B cell (primary cell): ENCODE measurements at regions of chr19 and their contacts with region 1.

Region 1: GRCh38 chr19:50804420-50805272 is 14.4 kb downstream of the ACP4 start:
- DNase-seq: peak; percentile 99
- ATAC-seq: peak; percentile 98
- H3K4me3 ChIP-seq: peak overlapping the region; percentile 80 to 98 (median 88)
- H3K4me3 Mint-ChIP-seq: peak overlapping the region; percentile 94
- H3K27ac ChIP-seq: peak overlapping the region; percentile 99
- H3K27ac Mint-ChIP-seq: peak overlapping the region; percentile 100
- H3K4me1 ChIP-seq: peaks cover 18 to 24% of the 10 kb centered on the region in 2 donors
- H3K4me1 Mint-ChIP-seq: peaks cover 39% of the 10 kb centered on the region
- H3K27me3 ChIP-seq: no peaks in the 10 kb centered on the region
- H3K27me3 Mint-ChIP-seq: no peaks in the 10 kb centered on the region
- CTCF ChIP-seq: no peak

Region 2: GRCh38 chr19:49929611-49930482 is 874.8 kb before region 1 on chr19:
- CTCF ChIA-PET with region 1: no interaction called
- POLR2A ChIA-PET with region 1: no interaction called
- intact Hi-C with region 1: loop called (anchors 10 kb)
- DNase-seq: peak; percentile 99
- ATAC-seq: peak; percentile 84
- H3K4me3 ChIP-seq: peak overlapping the region; percentile 70 to 98 (median 89)
- H3K4me3 Mint-ChIP-seq: peak overlapping the region; percentile 100
- H3K27ac ChIP-seq: peak overlapping the region; percentile 80 to 97
- H3K27ac Mint-ChIP-seq: peak overlapping the region; percentile 98
- H3K4me1 ChIP-seq: peaks cover 20 to 32% of the 10 kb centered on the region in 2 donors
- H3K4me1 Mint-ChIP-seq: peaks cover 53% of the 10 kb centered on the region
- H3K27me3 ChIP-seq: no peaks in the 10 kb centered on the region
- H3K27me3 Mint-ChIP-seq: no peaks in the 10 kb centered on the region
- CTCF ChIP-seq: no peak

Region 3: GRCh38 chr19:50383852-50384684 is 420.6 kb before region 1 on chr19 and contains the start of gene POLD1:
- CTCF ChIA-PET with region 1: no interaction called
- POLR2A ChIA-PET with region 1: no interaction called
- intact Hi-C with region 1: loop called (anchors 2 kb)
- DNase-seq: peak; percentile 100
- ATAC-seq: peak; percentile 96
- H3K4me3 ChIP-seq: peak within 1 kb of the TSS; percentile 59 to 92 (median 67)
- H3K4me3 Mint-ChIP-seq: peak within 1 kb of the TSS; percentile 94
- H3K27ac ChIP-seq: peak within 1 kb of the TSS; percentile 64 to 73
- H3K27ac Mint-ChIP-seq: peak within 1 kb of the TSS; percentile 92
- H3K4me1 ChIP-seq: peaks cover 12 to 18% of the 10 kb centered on the region in 2 donors
- H3K4me1 Mint-ChIP-seq: peaks cover 31% of the 10 kb centered on the region
- H3K27me3 ChIP-seq: no peaks in the 10 kb centered on the region
- H3K27me3 Mint-ChIP-seq: no peaks in the 10 kb centered on the region
- CTCF ChIP-seq: no peak
- total RNA-seq, gene POLD1: 43.6 and 52.4 TPM in 2 replicates

Region 4: GRCh38 chr19:50729894-50730293 is 74.8 kb before region 1 on chr19:
- CTCF ChIA-PET with region 1: no interaction called
- POLR2A ChIA-PET with region 1: no interaction called
- intact Hi-C with region 1: no loop called
- DNase-seq: no peak
- ATAC-seq: no peak
- H3K4me3 ChIP-seq: no peak overlapping the region
- H3K4me3 Mint-ChIP-seq: no peak overlapping the region
- H3K27ac ChIP-seq: no peak overlapping the region
- H3K27ac Mint-ChIP-seq: no peak overlapping the region
- H3K4me1 ChIP-seq: peaks cover 11 to 15% of the 10 kb centered on the region in 2 donors
- H3K4me1 Mint-ChIP-seq: peaks cover 15% of the 10 kb centered on the region
- H3K27me3 ChIP-seq: peaks cover 0 to 45% (median 12%) of the 10 kb centered on the region in 4 experiments
- H3K27me3 Mint-ChIP-seq: peaks cover 50% of the 10 kb centered on the region
- CTCF ChIP-seq: no peak

Region 5: DNA sequence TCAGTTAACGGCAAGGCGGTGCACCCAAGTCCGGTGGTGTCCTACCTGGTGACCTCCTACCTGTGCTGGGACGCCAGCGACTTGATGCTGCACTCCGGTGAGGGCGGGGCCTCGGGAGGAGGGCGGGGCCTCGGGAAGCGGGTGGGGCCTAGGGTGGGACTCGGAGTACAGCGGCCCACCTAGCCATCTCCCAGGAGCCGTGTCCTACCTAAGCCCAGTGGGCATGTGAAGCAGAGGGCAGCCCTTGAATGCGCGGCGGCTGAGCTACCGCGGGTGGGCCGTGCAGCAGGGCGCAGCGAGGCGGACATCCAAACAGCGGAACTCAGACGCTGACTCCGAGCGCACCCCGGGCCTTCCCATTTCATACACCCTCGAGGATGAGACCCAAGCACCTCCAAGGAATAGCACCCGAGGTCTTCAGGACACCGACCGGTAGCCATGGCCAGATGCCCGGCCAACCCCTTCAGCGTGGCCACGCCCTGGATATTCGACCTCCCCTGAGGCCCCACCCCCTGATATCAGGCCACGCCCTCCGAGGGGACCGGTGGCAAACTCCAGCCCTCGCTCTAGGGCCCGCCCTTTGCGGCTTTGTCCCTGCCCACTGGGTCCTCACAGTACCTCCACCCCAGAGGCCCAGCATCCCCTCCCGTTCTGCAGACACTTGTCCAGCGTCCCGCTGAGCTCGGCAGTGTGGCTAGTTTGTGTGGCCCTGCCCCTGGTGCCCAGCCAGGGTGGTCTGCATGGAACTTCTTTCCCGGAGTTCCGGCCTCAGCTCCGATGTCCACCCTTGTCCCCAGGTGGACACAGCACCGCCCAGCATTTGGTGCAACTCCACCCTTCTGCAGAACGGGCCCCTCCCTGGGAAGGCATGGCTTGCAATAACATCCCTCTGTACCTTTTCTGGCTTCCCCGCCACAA is 13.6 kb after region 1 on chr19:
- CTCF ChIA-PET with region 1: no interaction called
- POLR2A ChIA-PET with region 1: interaction called, 11 read pairs
- intact Hi-C with region 1: loop called (anchors 1 kb)
- DNase-seq: peak; percentile 77
- ATAC-seq: peak; percentile 69
- H3K4me3 ChIP-seq: peak overlapping the region in 4 of 5 experiments; percentile 60 to 76 (median 67)
- H3K4me3 Mint-ChIP-seq: peak overlapping the region; percentile 93
- H3K27ac ChIP-seq: peak overlapping the region in 1 of 2 donors; percentile 29
- H3K27ac Mint-ChIP-seq: peak overlapping the region; percentile 90
- H3K4me1 ChIP-seq: peaks cover 45 to 53% of the 10 kb centered on the region in 2 donors
- H3K4me1 Mint-ChIP-seq: peaks cover 63% of the 10 kb centered on the region
- H3K27me3 ChIP-seq: peaks cover 0 to 36% (median 2%) of the 10 kb centered on the region in 4 experiments
- H3K27me3 Mint-ChIP-seq: peaks cover 22% of the 10 kb centered on the region
- CTCF ChIP-seq: no peak

Region 6: DNA sequence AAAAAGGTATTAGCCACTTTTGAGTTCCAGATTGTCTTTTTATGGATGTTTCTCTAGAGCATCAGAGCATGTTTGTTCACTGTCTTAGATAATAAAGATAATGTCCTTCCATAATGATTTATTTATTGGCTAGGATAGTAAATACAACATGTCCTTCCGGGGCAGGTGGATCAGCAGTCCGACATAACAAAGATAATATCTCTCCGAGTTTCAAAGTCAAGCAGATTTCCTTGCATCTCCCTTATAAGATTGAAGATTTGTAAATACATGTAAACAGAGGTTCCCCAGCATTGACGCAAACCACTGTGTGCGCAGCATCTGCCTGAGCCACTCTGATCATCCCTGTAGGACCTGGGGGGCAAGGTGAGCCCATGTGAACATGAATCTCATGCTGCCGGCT is 37.5 kb after region 1 on chr19:
- CTCF ChIA-PET with region 1: no interaction called
- POLR2A ChIA-PET with region 1: no interaction called
- intact Hi-C with region 1: no loop called
- DNase-seq: no peak
- ATAC-seq: no peak
- H3K4me3 ChIP-seq: no peak overlapping the region
- H3K4me3 Mint-ChIP-seq: no peak overlapping the region
- H3K27ac ChIP-seq: no peak overlapping the region
- H3K27ac Mint-ChIP-seq: no peak overlapping the region
- H3K4me1 ChIP-seq: no peaks in the 10 kb centered on the region
- H3K4me1 Mint-ChIP-seq: peaks cover 9% of the 10 kb centered on the region
- H3K27me3 ChIP-seq: peaks cover 0 to 11% (median 0%) of the 10 kb centered on the region in 4 experiments
- H3K27me3 Mint-ChIP-seq: peaks cover 28% of the 10 kb centered on the region
- CTCF ChIP-seq: no peak

Region 7: DNA sequence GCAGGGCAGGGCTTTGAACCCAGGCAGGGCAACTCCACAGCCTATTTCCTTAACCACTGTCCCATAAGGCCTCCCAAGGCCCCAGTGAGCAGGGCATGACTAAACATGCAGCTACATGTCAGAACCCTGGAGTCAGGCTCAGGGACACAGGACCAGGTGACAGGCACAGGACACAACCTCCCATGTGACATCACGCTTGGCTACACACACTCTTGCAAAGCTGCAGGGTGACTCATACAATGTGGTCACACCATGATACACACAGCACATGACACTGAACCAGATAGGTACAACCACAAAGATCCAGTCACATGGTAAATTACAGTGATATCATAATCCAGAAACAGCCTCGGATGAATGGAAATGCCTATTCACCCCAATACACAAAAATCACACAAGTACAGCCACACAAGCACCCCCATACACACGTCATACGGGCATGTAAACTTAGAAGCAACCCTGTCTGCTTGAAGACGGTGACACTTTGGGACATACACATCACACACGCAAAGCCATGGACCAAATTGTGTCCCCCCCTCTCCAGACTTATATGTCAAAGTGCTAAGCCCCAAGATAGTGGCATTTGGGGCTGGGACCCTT is 92.0 kb after region 1 on chr19:
- CTCF ChIA-PET with region 1: no interaction called
- POLR2A ChIA-PET with region 1: interaction called, 4 read pairs
- intact Hi-C with region 1: loop called (anchors 1 kb)
- DNase-seq: peak; percentile 90
- ATAC-seq: peak; percentile 90
- H3K4me3 ChIP-seq: no peak overlapping the region
- H3K4me3 Mint-ChIP-seq: peak overlapping the region; percentile 66
- H3K27ac ChIP-seq: peak overlapping the region; percentile 78 to 84
- H3K27ac Mint-ChIP-seq: peak overlapping the region; percentile 94
- H3K4me1 ChIP-seq: peaks cover 20 to 26% of the 10 kb centered on the region in 2 donors
- H3K4me1 Mint-ChIP-seq: peaks cover 53% of the 10 kb centered on the region
- H3K27me3 ChIP-seq: no peaks in the 10 kb centered on the region
- H3K27me3 Mint-ChIP-seq: no peaks in the 10 kb centered on the region
- CTCF ChIP-seq: no peak